AG04450 (cell line): ENCODE measurements at regions of chr12 and their contacts with region 1.

Region 1: DNA sequence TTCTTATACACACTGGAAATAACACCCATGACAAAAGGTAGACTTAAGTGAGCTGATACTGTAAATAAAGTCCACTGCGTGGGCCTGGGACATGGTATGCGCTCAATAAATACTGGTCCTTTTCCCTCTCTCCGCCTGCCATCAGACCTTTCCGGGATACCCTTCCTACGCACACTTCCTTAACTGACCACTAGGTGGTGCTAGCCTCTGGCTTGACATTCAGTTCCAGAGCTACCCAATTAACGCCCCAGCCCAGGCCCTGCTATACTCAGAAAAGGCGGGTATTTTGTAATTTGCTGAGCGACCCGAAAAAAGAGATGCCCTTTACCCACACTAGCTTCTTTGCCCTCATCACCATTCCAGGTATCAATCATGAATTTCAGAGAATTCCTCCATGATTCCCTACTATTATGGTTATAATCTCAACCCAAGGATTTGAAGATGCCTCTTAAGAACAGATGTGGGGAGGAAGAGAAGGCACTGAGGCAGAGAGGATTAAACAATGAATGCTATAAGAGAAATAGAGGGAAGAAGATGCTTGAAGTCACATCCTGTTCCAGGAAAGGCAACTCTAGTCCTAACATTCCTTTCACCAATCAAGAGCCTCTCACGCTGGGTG is 3.9 kb upstream of the LRP1 start:
- DNase-seq: no peak
- H3K4me3 ChIP-seq: no peak overlapping the region
- H3K27ac ChIP-seq: no peak overlapping the region
- H3K27me3 ChIP-seq: no peaks in the 10 kb centered on the region
- CTCF ChIP-seq: peak; percentile 98

Region 2: GRCh38 chr12:57069523-57069922 is 54.8 kb before region 1 on chr12:
- CTCF ChIA-PET with region 1: interaction called, 21 read pairs
- POLR2A ChIA-PET with region 1: no interaction called
- DNase-seq: peak; percentile 73
- H3K4me3 ChIP-seq: no peak overlapping the region
- H3K27ac ChIP-seq: no peak overlapping the region
- H3K27me3 ChIP-seq: no peaks in the 10 kb centered on the region
- CTCF ChIP-seq: peak; percentile 90

Region 3: DNA sequence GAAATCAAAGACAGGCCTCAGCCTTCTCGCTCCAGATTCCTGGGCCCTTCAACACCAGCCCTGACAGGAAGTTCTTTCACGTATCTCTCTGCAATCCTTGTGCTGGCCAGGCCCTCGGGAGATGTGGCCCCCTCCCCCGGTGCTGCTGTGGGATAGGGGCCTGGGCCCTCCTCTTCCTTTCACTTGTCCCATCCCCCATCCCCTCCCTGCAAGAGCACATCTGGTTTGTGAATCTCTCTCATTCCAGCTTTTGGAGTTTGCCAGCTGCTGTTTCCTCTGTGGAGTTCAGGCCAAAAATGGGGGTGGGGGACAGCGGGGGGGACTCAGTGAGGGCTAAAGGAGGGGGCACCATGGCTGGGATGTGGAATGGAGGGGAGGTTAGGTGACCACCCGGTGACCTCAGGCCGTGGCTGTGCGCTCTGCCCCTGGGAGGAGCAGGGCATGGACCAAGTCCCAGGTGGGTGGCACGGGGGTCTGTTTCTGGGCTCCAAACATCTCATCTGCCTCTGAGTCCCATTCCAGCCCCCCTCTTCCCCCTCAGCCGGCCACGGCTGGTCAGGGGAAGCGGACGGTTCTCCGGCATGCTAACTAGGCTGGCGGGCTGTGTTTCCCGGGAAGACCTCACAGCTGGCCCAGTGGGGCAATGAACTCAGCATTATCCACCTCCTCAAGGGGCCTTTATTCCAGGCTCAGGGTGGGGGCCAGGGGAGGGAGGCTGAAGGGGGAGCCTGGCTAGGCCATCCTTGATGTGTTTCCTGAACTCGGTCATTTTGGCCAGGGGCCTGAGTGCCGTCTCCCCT is 11.4 kb after region 1 on chr12:
- CTCF ChIA-PET with region 1: interaction called, 13 read pairs
- POLR2A ChIA-PET with region 1: interaction called, 7 read pairs
- DNase-seq: no peak
- H3K4me3 ChIP-seq: peak overlapping the region; percentile 37
- H3K27ac ChIP-seq: peak overlapping the region; percentile 61
- H3K27me3 ChIP-seq: no peaks in the 10 kb centered on the region
- CTCF ChIP-seq: no peak

Region 4: DNA sequence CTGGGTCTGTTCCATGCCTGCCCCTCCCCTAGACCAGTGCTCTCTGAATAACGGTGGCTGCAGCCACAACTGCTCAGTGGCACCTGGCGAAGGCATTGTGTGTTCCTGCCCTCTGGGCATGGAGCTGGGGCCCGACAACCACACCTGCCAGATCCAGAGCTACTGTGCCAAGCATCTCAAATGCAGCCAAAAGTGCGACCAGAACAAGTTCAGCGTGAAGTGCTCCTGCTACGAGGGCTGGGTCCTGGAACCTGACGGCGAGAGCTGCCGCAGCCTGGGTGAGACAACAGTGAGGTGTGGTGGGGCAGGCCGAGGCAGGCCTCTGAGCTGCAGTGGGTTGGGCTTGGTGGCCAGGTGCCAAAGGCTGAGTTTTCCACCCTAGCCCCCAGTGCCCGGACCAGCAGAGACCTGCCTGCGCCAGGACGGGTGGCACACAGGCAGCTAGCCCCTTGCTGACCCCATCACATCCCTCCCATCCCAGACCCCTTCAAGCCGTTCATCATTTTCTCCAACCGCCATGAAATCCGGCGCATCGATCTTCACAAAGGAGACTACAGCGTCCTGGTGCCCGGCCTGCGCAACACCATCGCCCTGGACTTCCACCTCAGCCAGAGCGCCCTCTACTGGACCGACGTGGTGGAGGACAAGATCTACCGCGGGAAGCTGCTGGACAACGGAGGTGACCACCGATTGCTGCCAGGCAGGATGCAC is 51.2 kb after region 1 on chr12:
- CTCF ChIA-PET with region 1: interaction called, 41 read pairs
- POLR2A ChIA-PET with region 1: interaction called, 7 read pairs
- DNase-seq: peak; percentile 44
- H3K4me3 ChIP-seq: no peak overlapping the region
- H3K27ac ChIP-seq: no peak overlapping the region
- H3K27me3 ChIP-seq: no peaks in the 10 kb centered on the region
- CTCF ChIP-seq: peak; percentile 74

Region 5: GRCh38 chr12:57238854-57239554 is 114.6 kb after region 1 on chr12:
- CTCF ChIA-PET with region 1: interaction called, 10 read pairs
- POLR2A ChIA-PET with region 1: no interaction called
- DNase-seq: peak; percentile 72
- H3K4me3 ChIP-seq: peak overlapping the region; percentile 68
- H3K27ac ChIP-seq: peak overlapping the region; percentile 89
- H3K27me3 ChIP-seq: peaks cover 20% of the 10 kb centered on the region
- CTCF ChIP-seq: peak; percentile 100